ENCODE measurements at regions of chr6 and their contacts with region 1.

Region 1: DNA sequence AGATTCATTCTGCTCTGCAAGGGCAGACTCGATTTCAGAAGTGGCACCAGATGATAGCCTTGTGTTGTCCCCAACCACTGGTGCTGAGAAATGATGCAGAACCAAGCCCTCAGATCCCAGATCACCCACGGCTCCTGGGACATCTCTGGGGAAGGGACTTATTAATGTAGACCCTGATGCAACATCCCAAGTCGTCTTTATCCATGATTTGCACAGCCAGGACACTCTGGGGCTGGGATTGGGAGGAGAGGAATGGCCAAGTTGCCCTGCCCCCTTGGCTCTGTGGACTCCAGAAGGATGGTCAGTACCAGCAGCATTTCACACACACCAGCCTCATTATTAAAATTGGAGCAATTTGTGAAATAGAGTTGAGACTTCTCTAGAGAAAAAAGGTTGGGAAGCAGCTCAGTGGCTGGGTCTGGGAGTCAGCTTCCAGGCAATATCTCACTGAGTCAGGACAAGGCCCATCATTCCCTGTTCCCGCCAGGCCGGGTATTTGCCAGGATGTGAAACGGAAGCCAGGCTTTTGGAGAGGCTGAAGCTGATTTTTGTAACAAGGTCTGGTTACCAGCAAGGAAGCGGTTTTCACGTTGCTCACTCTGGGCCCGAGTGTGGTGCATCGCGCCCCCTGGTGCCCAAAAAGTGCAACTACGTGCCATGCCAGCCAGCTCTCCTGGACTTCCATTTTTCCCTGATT is 67.4 kb downstream of the ZBTB2 start:
- DNase-seq: peak; percentile 65 to 97 (median 84)

Region 2: DNA sequence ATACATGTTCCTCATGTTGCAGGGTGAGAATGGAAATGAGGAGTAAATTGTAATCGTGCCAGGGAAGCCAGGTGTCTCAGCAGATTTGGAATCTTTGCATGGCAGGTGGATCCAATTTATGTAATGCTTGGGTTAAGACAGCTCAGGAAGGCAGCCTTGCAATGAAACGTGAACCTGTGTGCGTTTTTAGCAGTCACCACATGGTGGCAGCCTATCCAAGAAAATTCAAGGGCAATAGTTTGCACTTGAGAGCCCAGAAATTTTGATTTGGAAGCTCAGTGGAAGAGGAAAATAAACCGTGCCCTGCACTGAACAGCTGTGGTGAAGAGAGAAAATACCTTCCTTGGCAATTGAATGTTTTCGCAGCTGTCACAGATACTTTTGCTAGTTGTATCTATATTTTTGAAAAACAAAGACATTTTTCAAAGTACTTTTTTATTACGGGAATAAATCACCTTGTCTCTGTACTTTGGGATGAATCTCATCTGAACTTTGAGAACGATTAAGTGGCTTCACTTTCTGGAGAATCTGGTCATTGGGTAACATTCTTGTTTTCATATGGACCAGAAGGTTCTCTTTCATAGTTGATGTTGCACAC is 432.0 kb before region 1 on chr6:
- intact Hi-C with region 1: loop called (anchors 2 kb)
- DNase-seq: peak in 9 of 10 donors; percentile 43 to 95 (median 72)

Region 3: DNA sequence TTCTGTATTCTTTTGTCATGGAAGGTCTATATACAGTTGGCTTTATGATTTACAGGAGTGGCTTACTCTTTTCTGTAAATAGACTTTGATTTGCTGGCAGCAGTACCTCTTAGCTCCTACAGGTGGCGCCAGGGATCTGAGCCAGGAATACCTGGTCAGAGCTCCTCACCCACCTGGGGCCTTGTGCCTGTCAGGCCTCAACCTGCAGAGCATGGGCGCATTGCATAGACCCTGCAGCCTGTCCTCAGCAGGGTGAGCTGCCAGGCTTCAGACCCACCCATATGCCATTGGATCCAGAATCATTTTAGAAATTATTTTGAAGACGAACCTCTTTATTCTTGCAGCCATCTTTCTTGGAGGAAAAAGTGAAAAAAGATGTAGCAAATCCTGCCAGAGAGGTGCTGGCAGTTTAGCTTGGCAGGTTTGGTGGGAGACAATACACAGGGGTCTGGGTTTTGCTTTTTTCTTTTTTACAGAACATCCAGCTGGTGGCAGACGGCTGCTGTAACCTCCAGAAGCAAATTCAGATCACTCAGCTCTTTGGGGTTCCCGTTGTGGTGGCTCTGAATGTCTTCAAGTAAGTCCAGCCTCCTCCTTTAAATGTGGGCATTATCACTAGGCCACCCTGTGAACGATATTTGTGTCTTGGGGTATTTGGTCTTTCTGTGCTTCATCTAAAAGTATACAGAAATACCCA is 309.4 kb before region 1 on chr6:
- intact Hi-C with region 1: loop called (anchors 1 kb)
- DNase-seq: peak; percentile 55 to 94 (median 70)

Region 4: DNA sequence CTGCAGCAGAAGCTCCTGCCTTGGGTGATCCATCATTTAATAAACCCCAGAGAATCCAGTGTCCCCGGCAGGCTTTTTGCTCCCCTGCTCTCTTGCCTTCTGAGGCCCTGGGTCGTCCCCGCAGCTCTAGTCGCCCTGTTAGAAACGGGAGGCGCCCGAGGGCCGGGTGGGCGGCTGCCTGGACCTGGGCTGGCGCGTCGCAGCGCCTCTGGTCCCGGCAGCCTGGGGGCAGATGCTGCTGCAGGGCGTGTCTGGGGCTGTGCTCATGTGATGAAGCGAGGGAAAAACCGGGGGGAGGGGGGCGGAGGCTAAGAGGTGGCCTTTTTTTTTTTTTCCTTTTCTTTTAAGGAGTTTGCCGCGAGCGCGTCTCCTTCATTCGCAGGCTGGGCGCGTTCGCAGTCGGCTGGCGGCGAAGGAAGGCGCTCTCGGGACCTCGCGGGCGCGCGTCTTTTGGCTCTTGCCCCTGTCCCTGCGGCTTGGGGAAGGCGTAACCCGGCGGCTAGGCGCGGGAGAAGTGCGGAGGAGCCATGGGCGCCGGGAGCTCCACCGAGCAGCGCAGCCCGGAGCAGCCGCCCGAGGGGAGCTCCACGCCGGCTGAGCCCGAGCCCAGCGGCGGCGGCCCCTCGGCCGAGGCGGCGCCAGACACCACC is 83.8 kb before region 1 on chr6:
- intact Hi-C with region 1: loop called (anchors 5 kb)
- DNase-seq: peak; percentile 23 to 94 (median 64)

Measured in posterior cingulate gyrus (tissue), 11 donors.